ENCODE measurements at regions of chr18 and their contacts with region 1.

Region 1: DNA sequence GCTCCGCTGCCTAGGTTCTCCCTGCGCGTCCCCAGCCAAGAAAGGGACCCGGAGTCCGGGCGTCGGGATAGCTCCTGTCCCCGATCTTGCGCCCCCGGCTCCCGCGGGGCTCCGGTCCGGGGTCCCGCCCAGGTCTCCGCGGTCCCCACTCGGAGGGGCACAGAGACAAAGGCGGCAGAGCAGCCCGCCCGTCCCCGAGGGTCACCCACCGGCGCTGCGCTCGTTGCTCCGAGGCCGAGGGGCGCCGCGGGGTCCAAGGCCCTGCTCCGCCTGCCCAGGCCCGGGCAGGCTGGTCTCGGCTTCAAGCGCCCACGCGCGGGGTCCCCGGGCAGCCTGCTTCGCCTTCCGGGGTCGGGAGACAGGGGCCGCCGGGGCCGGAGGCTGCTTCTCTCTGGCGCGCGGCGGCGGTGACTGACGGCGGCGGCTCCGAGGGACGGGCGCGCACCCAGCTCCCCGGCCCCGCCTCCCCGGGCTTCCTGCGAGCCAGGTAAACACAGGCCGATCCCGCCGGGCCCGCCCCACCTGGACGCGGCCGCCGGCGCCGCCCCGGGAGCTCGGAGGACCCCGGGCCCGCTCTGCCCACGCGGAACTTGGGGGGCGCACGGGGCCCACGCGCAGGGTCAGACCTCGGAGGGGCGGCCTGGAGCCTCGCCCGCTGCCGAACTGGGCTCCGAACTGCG is at the start of gene MBP:
- DNase-seq: peak in 1 of 2 donors; percentile 82
- H3K4me3 ChIP-seq: peak within 1 kb of the TSS; percentile 77 to 90
- H3K27ac ChIP-seq: peak within 1 kb of the TSS; percentile 92 to 96
- H3K4me1 ChIP-seq: peaks cover 5 to 31% of the 10 kb centered on the region in 2 donors
- H3K27me3 ChIP-seq: no peaks in the 10 kb centered on the region
- CTCF ChIP-seq: no peak
- total RNA-seq, gene MBP: 8.1 TPM

Region 2: GRCh38 chr18:75923169-75923568 is 1209.3 kb before region 1 on chr18:
- intact Hi-C with region 1: loop called (anchors 10 kb)
- DNase-seq: peak; percentile 12 to 91
- H3K4me3 ChIP-seq: no peak overlapping the region
- H3K27ac ChIP-seq: no peak overlapping the region
- H3K4me1 ChIP-seq: peaks cover 0 to 6% of the 10 kb centered on the region in 2 donors
- H3K27me3 ChIP-seq: no peaks in the 10 kb centered on the region
- CTCF ChIP-seq: no peak

Region 3: GRCh38 chr18:76822510-76823160 is 309.9 kb before region 1 on chr18 and contains the start of gene ZNF236:
- intact Hi-C with region 1: loop called (anchors 5 kb)
- DNase-seq: peak in 1 of 2 donors; percentile 84
- H3K4me3 ChIP-seq: peak within 1 kb of the TSS; percentile 78 to 93
- H3K27ac ChIP-seq: peak within 1 kb of the TSS; percentile 92 to 96
- H3K4me1 ChIP-seq: peaks cover 0 to 9% of the 10 kb centered on the region in 2 donors
- H3K27me3 ChIP-seq: no peaks in the 10 kb centered on the region
- CTCF ChIP-seq: no peak
- total RNA-seq, gene ZNF236: 9.7 TPM

Region 4: GRCh38 chr18:77067291-77068061 is 65.0 kb before region 1 on chr18:
- intact Hi-C with region 1: loop called (anchors 2 kb)
- DNase-seq: peak; percentile 67 to 90
- H3K4me3 ChIP-seq: no peak overlapping the region
- H3K27ac ChIP-seq: peak overlapping the region; percentile 69 to 84
- H3K4me1 ChIP-seq: peaks cover 8 to 42% of the 10 kb centered on the region in 2 donors
- H3K27me3 ChIP-seq: no peaks in the 10 kb centered on the region
- CTCF ChIP-seq: peak in 1 of 3 experiments; percentile 24

Region 5: DNA sequence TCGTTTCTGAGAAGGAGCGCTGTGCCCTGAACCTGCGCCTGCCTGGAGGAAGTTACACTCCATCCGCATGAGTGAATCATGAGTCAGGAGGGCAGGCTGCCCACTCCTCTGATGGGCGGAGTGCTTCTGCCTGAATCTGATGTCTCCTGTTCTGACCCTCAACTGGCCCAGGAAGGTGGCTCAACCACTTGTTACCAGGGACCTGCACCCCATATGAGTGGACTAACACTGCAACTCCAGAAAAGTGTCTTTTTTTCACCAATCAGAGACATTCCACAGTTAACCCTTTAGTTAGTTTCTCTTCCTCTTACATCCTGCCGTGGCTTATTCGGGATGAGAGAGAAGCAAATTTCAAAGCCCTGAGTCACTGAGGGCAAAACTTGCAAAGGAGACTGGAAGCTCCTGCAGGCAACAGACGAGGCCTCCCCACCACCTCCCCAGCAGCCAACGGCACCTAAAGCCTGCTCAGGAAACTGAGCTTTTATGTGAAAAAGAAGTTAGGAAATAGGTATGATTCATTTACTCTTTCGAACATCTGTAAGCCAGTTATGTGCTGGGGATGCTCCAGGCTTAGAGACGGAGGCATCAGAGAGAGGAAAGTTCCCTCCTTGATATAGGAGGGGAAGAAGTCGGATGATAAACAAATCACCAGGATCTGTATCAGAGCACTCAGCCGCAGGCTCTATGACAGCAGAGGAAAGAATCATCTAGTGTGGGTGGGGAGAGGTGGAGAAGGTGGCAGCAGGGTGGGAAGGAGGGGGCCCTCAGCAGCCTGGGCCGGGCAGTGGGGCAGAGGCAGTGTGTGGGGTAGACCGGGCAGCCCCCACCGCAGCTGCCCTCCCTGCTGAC is 30.9 kb before region 1 on chr18:
- intact Hi-C with region 1: loop called (anchors 2 kb)
- DNase-seq: peak; percentile 84 to 94
- H3K4me3 ChIP-seq: peak overlapping the region in 1 of 2 donors; percentile 0
- H3K27ac ChIP-seq: peak overlapping the region; percentile 73 to 84
- H3K4me1 ChIP-seq: peaks cover 16 to 50% of the 10 kb centered on the region in 2 donors
- H3K27me3 ChIP-seq: no peaks in the 10 kb centered on the region
- CTCF ChIP-seq: no peak

Region 6: DNA sequence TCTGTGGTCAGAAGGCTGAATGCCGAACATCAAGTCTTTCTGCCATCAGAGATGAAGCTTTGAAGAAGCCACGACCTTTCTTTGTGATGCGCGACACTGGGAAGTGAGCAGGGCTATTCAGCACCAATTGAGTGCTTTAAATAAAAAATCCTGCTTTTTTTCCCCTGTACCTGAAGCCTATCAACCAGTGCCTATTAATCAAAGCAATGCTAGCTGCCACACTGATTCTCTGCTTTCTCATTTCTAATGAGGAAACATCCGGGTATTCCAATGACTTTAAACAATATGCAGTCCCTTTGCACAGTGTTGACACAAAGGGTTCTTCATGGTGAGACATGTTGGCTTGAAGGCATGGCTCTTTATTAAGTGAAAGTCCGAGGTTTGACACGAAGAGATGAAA is 205.1 kb after region 1 on chr18:
- intact Hi-C with region 1: no loop called
- DNase-seq: no peak
- H3K4me3 ChIP-seq: no peak overlapping the region
- H3K27ac ChIP-seq: no peak overlapping the region
- H3K4me1 ChIP-seq: no peaks in the 10 kb centered on the region
- H3K27me3 ChIP-seq: no peaks in the 10 kb centered on the region
- CTCF ChIP-seq: no peak

Measured in ascending aorta (tissue), 2 donors.